ENCODE measurements at regions of chr12 and their contacts with region 1.

Region 1: DNA sequence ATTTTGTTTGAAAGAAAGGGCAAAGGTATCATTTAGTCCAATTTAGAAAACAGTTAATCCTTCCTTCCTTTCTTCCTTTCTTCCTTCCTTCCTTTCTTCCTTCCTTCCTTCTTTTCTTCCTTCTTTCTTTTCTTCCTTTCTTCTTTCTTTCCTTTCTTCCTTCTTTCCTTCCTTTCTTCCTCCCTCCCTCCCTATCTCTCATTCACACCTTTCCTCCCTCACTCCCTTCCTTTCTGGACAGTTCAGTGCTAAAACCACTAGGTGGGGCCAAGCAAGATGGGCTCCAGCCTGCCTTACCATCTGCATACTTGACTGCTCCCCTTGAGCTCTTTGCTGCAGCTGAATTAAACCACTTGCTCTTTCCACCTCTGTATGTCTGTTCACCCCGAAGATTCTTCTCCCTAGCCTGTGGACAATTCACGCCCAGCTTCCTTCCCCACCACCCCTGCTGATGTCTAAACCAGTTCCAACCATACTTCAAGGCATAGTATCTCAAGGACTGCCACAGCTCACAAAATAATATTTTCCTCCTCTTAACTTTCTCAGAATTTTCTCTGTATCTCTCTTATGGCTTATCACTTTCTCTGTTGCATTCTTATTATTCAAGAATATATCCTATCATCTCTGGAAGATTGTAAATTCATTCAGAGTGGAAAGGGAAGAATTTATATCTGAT is 78.0 kb downstream of the DBX2 start:
- H3K4me3 ChIP-seq: no peak overlapping the region
- H3K27ac ChIP-seq: no peak overlapping the region
- H3K4me1 ChIP-seq: no peaks in the 10 kb centered on the region
- CTCF ChIP-seq: peak; percentile 92

Region 2: GRCh38 chr12:44921736-44922135 is 51.1 kb before region 1 on chr12:
- CTCF ChIA-PET with region 1: no interaction called
- POLR2A ChIA-PET with region 1: no interaction called
- H3K4me3 ChIP-seq: no peak overlapping the region
- H3K27ac ChIP-seq: no peak overlapping the region
- H3K4me1 ChIP-seq: no peaks in the 10 kb centered on the region
- CTCF ChIP-seq: no peak

Region 3: GRCh38 chr12:45122768-45123380 is 150.0 kb after region 1 on chr12:
- CTCF ChIA-PET with region 1: interaction called, 12 read pairs
- POLR2A ChIA-PET with region 1: no interaction called
- H3K4me3 ChIP-seq: no peak overlapping the region
- H3K27ac ChIP-seq: no peak overlapping the region
- H3K4me1 ChIP-seq: no peaks in the 10 kb centered on the region
- CTCF ChIP-seq: peak; percentile 42

Measured in HEK293 (cell line).